Activated CD4-positive, alpha-beta T cell treated with anti-CD3 and anti-CD28 coated beads for 36 hours (primary cell): ENCODE measurements at regions of chr3 and their contacts with region 1.

Region 1: DNA sequence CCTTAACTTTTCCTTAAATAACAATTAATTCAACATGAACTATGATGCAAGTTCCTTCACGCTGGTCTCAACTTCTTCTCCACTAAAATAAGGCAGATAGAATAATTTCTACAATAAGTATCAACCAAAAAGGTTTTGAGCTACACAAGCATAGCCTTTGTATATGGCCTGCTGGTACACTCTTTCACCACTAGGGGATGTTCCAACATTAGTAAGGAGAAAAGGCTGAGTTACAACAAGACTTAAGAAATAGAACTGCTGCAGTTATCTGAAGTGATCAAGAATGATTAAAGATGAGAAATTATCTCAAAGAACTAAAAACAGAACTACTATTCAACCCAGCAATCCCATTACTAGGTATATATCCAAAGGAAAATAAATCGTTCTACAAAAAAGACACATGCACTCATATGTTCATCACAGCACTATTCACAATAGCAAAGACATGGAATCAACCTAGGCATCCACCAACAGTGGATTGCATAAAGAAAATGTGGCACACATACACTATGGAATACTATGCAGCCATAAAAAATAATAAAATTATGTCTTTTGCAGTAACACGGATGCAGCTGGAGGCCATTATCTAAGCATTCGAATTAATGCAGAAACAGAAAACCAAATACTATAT is 14.4 kb downstream of the ATP13A3 start:
- DNase-seq: no peak
- ATAC-seq: peak; percentile 88
- H3K4me3 Mint-ChIP-seq: no peak overlapping the region
- H3K27ac Mint-ChIP-seq: no peak overlapping the region
- H3K4me1 Mint-ChIP-seq: peaks cover 23% of the 10 kb centered on the region
- H3K27me3 Mint-ChIP-seq: no peaks in the 10 kb centered on the region

Region 2: DNA sequence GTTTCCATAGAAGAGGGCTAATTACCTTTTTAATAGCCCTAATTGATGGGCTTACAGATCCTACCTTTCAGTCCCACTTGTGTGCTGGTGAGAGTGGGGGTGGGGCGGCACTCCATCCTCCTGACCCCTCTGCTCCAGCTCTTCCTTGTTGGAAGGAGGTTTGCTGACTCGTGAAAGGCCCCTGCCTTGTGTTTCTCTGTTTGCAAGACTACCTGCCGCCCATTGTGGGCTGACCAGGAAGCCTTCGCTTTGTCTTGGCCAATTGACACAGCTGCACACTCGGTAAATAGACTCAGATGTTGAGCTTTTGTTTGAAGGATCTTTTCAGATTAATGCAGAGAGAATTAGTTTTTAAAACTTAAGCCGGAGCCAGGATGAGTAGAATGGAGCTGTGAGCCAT is 533.8 kb before region 1 on chr3:
- CTCF ChIA-PET with region 1: no interaction called
- POLR2A ChIA-PET with region 1: no interaction called
- intact Hi-C with region 1: no loop called
- DNase-seq: no peak
- ATAC-seq: no peak
- H3K4me3 Mint-ChIP-seq: no peak overlapping the region
- H3K27ac Mint-ChIP-seq: no peak overlapping the region
- H3K4me1 Mint-ChIP-seq: no peaks in the 10 kb centered on the region
- H3K27me3 Mint-ChIP-seq: no peaks in the 10 kb centered on the region

Region 3: DNA sequence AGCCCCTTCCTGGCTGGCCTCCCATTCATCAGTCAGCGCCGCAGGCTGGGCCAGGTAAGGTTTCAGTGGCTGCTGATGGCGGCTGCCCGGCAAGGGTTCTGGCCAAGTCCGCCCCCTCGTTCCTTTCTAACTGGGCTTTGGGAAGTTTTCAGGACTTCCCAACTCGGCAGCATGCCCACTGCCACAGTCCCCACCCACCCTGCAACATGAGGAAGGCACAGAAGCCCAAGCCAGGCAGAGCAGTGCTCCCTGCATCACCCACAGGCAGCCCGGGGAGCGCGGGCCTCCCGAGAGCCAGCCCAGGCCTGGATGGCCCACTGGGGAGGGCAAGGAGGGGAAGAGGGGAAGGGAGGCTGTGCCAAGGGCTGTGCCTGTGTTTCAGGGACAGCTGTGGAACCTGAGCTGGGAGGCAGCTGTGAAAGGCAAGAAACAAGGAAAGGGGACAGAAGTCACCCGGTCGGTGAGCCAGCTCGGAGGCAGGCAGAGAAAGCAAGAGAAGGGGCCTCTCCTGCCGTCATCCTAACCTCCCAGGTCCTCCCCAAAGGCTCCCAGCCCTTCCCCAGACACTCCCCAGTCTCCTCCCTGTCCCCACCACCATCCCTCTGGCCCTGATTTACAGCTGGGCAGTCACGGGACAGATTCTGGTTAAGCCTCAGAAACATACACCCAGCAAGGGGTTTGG is 195.2 kb before region 1 on chr3:
- CTCF ChIA-PET with region 1: no interaction called
- POLR2A ChIA-PET with region 1: no interaction called
- intact Hi-C with region 1: no loop called
- DNase-seq: no peak
- ATAC-seq: no peak
- H3K4me3 Mint-ChIP-seq: no peak overlapping the region
- H3K27ac Mint-ChIP-seq: no peak overlapping the region
- H3K4me1 Mint-ChIP-seq: peaks cover 5% of the 10 kb centered on the region
- H3K27me3 Mint-ChIP-seq: no peaks in the 10 kb centered on the region

Region 4: DNA sequence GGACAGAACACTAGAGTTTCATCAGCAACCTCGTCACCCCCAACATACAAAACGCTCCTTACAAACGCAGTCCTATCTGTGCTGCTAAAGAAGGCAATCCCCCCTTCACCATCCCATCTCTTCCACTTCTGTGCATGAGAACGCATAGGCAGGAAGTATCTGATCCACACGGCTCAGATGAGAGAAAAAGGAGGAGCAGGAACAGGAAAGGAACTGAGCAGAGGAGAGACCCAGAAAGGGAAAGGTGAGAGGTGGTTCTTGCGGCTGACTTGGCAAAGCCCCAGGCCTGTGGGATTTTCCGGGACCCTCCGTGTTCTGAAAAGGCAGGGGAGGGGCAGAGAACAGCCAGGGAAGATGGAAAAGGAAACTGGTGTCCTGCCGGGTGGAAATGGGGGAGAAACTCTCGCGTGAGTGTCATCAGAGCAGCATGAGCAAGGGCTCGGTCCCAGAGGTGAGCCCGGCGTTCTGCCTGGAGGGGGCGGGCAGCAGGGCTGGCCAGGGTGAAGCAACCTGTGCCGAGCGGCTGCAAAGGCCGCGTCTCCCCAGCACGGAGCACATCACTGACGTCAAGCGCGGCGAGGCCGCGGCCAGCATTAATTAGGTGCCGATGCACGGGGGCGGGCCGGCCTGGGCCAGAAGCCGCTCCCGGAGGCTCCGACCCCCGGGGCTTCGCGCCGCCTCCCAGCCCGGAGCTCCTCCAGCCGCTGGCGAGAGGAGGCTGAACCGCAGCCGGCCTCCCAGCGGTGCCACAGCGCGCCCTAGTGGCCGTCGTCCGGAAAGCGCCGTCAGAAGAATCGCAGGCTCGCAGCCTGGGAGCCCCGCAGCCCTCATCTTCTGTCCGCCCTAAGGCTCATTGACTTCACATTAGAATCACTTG is 157.1 kb before region 1 on chr3:
- CTCF ChIA-PET with region 1: no interaction called
- POLR2A ChIA-PET with region 1: no interaction called
- intact Hi-C with region 1: no loop called
- DNase-seq: peak; percentile 89
- ATAC-seq: peak; percentile 89
- H3K4me3 Mint-ChIP-seq: peak overlapping the region; percentile 43
- H3K27ac Mint-ChIP-seq: peak overlapping the region; percentile 3
- H3K4me1 Mint-ChIP-seq: peaks cover 8% of the 10 kb centered on the region
- H3K27me3 Mint-ChIP-seq: peaks cover 21% of the 10 kb centered on the region

Region 5: GRCh38 chr3:194422188-194422587 is 50.2 kb before region 1 on chr3:
- CTCF ChIA-PET with region 1: no interaction called
- POLR2A ChIA-PET with region 1: no interaction called
- intact Hi-C with region 1: no loop called
- DNase-seq: no peak
- ATAC-seq: no peak
- H3K4me3 Mint-ChIP-seq: no peak overlapping the region
- H3K27ac Mint-ChIP-seq: no peak overlapping the region
- H3K4me1 Mint-ChIP-seq: no peaks in the 10 kb centered on the region
- H3K27me3 Mint-ChIP-seq: no peaks in the 10 kb centered on the region

Region 6: DNA sequence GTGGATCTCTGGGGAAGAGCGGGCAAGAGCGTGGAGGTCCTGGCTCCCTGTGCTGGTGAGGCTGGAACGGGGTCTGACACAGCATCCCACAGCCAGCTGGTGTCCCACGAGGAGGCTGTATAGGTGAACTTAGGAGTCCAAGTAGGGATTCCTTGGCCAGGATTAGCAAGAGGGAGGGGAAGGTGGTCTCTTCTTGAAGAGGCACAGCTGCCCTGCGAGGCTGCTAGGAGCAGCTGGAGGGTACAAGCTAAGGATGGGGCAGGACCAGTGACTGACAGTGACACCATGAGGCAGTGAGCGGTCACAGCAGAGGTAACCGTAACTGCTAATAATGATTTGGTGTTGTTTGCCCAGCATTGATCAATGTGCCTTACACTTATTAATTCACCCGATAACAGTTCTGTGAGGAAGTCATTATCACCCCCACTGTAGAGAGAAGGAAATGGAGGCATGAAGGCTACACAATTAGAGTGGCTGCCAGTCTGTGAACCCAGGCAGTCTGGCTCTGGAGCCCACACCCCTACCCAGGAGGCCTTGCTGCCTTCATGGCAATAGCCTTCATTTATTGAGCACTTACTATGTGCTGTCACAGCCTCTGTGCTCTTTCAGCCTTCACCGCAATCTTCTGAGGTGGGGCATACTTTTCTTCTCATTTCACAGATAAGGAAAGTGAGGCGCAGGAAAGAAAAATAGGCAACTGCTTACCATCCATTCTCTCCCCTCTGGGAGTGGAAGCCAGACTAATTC is 101.5 kb after region 1 on chr3:
- CTCF ChIA-PET with region 1: interaction called, 40 read pairs
- POLR2A ChIA-PET with region 1: no interaction called
- intact Hi-C with region 1: loop called (anchors 1 kb)
- DNase-seq: peak; percentile 65
- ATAC-seq: peak; percentile 92
- H3K4me3 Mint-ChIP-seq: no peak overlapping the region
- H3K27ac Mint-ChIP-seq: no peak overlapping the region
- H3K4me1 Mint-ChIP-seq: peaks cover 22% of the 10 kb centered on the region
- H3K27me3 Mint-ChIP-seq: peaks cover 20% of the 10 kb centered on the region